ENCODE measurements at regions of chr20 and their contacts with region 1.

Region 1: GRCh38 chr20:5788385-5788895 is 38.2 kb downstream of the SHLD1 start:
- DNase-seq: peak; percentile 33 to 59
- H3K4me3 ChIP-seq: no peak overlapping the region
- H3K27ac ChIP-seq: no peak overlapping the region
- H3K4me1 ChIP-seq: peaks cover 0 to 4% (median 1%) of the 10 kb centered on the region in 4 experiments; a peak in 2 of 7 replicates
- H3K27me3 ChIP-seq: no peaks in the 10 kb centered on the region
- CTCF ChIP-seq: peak; percentile 48 to 97 (median 82)
- EP300 ChIP-seq: no peak
- POLR2A ChIP-seq: no peak
- RAD21 ChIP-seq: peak; percentile 93 to 95

Region 2: GRCh38 chr20:5569021-5569420 is 219.4 kb before region 1 on chr20:
- CTCF ChIA-PET with region 1: interaction called, 13 read pairs
- POLR2A ChIA-PET with region 1: no interaction called
- DNase-seq: no peak
- H3K4me3 ChIP-seq: no peak overlapping the region
- H3K27ac ChIP-seq: no peak overlapping the region
- H3K4me1 ChIP-seq: no peaks in the 10 kb centered on the region
- H3K27me3 ChIP-seq: no peaks in the 10 kb centered on the region
- CTCF ChIP-seq: peak in 1 of 3 experiments; percentile 8; a peak in 1 of 4 replicates
- EP300 ChIP-seq: no peak
- POLR2A ChIP-seq: no peak
- RAD21 ChIP-seq: peak; percentile 33 to 49; a peak in 3 of 4 replicates

Region 3: DNA sequence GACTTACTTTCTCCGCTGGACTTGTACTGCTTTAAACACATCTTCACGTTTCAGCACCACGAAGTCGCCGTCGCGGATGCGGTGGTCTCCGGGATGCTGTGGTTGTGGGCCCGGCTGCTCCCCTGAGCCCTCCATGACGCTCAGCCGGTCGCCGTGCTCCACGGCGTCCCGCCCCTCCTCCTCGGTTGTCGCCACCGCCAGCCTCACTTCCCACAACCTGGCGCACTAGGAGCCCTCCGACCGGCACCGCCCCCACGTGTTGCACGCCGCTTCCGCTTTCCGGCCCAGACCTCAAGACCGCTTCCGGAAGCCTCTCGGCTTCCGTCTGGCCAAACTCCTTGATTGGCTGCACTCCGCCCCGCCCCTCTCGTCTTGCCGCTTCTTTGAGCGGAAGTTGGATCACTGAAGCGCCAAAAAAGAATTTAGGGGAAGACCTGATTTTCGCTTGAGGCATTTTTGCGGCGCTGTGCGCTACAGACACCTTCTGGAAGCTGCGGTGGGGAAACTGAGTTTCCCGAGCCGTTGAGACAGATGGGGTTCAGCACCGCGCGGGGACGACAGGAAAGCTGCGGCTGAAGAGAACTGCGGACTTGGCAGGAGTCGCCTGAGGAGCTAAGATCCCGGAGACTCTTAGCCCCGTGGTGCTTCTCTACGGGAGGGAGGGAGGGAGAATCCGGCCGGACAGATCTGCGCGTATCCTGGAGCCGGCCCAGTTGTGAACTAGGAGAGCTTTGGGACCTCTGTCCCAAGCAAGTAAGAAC is 162.0 kb after region 1 on chr20 and contains the starts of genes MCM8 and TRMT6:
- CTCF ChIA-PET with region 1: no interaction called
- POLR2A ChIA-PET with region 1: no interaction called
- DNase-seq: peak; percentile 94 to 96
- H3K4me3 ChIP-seq: peak within 1 kb of the TSS; percentile 84 to 92 (median 87)
- H3K27ac ChIP-seq: peak within 1 kb of the TSS; percentile 62; the same call in 1 of the 2 replicates
- H3K4me1 ChIP-seq: peaks cover 0 to 5% (median 1%) of the 10 kb centered on the region in 4 experiments; a peak in 4 of 7 replicates
- H3K27me3 ChIP-seq: no peaks in the 10 kb centered on the region
- CTCF ChIP-seq: peak in 1 of 3 experiments; percentile 6; a peak in 1 of 4 replicates
- EP300 ChIP-seq: peak in 1 of 2 experiments; percentile 11; a peak in 1 of 3 replicates
- POLR2A ChIP-seq: peak; percentile 30 to 64
- RAD21 ChIP-seq: no peak
- total RNA-seq, gene MCM8: 30.7 and 31.9 TPM in 2 replicates
- total RNA-seq, gene TRMT6: 21.2 and 23.3 TPM in 2 replicates